Cardiac septum (tissue), 1 donor: ENCODE measurements at regions of chr10 and their contacts with region 1.

Region 1: GRCh38 chr10:77926566-77927401 is at the start of gene DLG5:
- DNase-seq: no peak
- total RNA-seq, gene DLG5: 19.5 TPM

Region 2: GRCh38 chr10:77827383-77827782 is 99.4 kb before region 1 on chr10:
- intact Hi-C with region 1: no loop called
- DNase-seq: no peak

Region 3: DNA sequence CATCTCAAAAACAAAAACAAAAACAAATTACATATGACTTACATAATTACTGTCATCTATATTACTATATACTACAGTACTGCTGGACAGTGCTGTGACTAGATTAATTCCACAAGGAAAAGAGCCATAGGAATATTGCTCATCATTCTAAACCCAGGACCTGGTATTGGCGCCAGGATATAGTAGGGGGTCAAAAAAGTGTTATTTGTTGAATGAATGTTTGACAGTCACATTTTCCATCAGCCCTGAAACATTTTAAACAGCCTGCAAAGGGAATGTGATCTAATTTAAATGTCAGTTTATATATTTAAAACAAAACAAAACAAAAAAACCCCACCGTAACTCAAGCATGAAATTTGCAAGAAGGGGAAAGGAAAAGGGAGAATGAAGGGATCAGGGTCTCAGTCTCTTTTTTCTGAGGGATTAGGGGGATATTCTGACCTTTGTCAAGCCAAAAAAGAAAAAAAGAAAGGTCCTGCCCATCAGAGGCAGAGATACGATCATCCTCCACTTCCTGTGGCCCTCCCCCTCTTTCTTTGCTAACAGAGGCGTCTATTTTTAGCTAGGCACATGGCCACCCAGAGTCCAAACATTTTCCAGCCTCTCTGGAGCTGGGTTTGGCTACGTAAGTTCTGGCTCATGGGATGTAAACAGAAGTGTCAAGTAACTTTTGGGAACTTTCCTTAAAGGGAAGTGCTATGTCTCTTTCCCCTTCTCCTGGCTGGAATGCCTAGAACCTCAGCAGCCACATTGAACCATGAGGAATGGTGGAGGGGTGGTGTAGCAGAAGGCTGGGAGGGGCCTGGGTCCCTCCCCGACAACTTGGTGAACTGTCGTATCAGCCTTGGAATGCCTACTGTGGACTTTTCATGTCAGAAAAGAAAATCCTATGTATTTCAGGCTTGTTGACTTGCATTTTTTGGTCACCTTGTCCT is 44.4 kb after region 1 on chr10:
- intact Hi-C with region 1: loop called (anchors 5 kb)
- DNase-seq: no peak